ENCODE measurements at regions of chr19 and their contacts with region 1.

Region 1: DNA sequence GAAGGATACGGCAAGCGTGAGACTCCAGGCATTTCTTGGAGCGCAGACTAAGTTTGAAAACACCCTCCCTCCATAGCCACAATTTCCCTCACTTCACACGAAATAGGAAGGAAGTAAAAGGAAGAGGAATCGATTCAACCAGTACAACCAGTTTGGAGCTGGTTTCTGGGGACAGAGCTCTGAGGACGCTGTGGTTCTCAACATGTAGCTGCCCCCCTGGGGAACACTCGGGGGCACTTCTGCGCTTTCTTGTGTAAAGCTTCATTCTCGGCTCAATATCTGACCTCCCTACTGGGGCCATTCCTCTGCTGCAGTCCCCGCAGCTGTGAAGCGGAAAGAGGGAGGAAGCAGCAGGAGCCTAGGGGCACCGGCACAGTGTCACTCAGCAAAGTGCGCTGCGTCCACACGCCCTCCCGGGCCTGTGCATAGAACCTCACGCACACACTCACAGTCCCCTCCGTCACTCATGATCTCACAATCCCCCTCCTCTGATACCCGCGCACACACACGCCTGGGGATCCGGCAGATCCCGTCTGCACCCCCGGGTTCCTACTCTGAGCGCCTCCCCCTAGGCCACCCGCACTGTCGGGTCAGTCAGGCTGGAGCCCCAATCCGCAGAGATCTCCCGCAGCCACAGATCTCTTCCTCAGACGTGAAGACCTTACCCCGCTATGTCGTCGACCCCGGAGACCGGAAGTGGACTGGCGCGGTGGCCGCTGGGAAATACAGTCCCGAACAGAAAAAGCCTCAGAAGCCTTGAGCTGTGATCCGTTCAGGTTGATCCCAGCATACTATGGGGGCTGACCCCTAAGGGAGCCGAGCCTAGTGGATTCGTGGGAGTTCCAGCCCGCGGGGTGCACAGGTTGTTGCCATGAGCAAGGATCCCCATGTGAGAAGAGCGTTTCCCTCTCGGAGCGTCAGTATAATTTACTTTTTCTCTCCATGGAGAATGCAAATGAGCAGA is at the start of gene ZNF780A:
- DNase-seq: peak; percentile 73
- H3K4me3 Mint-ChIP-seq: peak within 1 kb of the TSS; percentile 100
- H3K27ac Mint-ChIP-seq: peak within 1 kb of the TSS; percentile 99
- H3K4me1 Mint-ChIP-seq: peaks cover 43% of the 10 kb centered on the region
- H3K27me3 Mint-ChIP-seq: peaks cover 3% of the 10 kb centered on the region
- total RNA-seq, gene ZNF780A: 14.8 and 16.7 TPM in 2 replicates

Region 2: GRCh38 chr19:40055832-40056504 is 34.6 kb before region 1 on chr19 and contains the start of gene ZNF780B:
- intact Hi-C with region 1: loop called (anchors 1 kb)
- DNase-seq: peak; percentile 69
- H3K4me3 Mint-ChIP-seq: peak within 1 kb of the TSS; percentile 97
- H3K27ac Mint-ChIP-seq: peak within 1 kb of the TSS; percentile 92
- H3K4me1 Mint-ChIP-seq: peaks cover 42% of the 10 kb centered on the region
- H3K27me3 Mint-ChIP-seq: peaks cover 12% of the 10 kb centered on the region
- total RNA-seq, gene ZNF780B: 25.8 and 29.0 TPM in 2 replicates

Region 3: DNA sequence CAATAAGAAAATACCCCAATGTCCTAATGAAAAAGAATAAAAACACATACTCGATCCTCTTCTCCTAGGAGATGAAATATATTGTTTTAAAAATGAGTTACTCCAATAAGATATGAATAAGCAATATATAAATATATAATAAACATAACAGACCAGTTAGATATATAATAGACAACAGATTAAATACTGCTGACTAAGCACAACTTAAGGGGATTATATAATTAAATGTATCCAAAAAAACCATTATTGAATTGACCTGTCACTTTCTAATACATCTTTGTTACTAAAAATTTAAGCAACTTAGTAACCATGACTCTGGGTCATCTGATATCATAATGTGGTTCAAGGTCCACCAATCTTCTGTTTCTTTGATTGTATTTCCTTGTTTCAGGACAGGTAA is 20.5 kb before region 1 on chr19:
- intact Hi-C with region 1: no loop called
- DNase-seq: no peak
- H3K4me3 Mint-ChIP-seq: no peak overlapping the region
- H3K27ac Mint-ChIP-seq: no peak overlapping the region
- H3K4me1 Mint-ChIP-seq: no peaks in the 10 kb centered on the region
- H3K27me3 Mint-ChIP-seq: no peaks in the 10 kb centered on the region

Region 4: DNA sequence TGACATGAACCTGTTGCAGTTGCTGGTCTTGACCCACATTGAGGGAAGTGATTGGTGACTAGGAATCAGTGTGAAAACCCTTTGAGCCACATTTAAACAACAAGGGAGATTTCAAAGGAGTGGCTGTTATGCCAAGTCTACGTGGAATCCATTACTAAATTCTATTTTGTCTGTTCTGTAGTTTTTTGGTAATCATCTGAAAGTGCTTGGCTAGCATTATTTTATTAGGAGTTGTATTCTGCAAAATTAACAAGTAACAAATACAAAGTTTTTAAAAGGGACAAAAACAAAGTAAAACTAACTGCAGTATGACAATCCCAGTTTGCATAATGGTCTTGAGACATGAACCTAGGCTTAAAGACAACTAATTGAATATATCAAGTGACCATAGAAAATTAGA is 14.2 kb after region 1 on chr19:
- intact Hi-C with region 1: no loop called
- DNase-seq: no peak
- H3K4me3 Mint-ChIP-seq: no peak overlapping the region
- H3K27ac Mint-ChIP-seq: no peak overlapping the region
- H3K4me1 Mint-ChIP-seq: no peaks in the 10 kb centered on the region
- H3K27me3 Mint-ChIP-seq: peaks cover 8% of the 10 kb centered on the region